ENCODE measurements at regions of chr2 and their contacts with region 1.

Region 1: GRCh38 chr2:68157402-68158133 is at the start of gene PNO1:
- DNase-seq: peak; percentile 98
- H3K4me3 Mint-ChIP-seq: peak within 1 kb of the TSS; percentile 91
- H3K27ac Mint-ChIP-seq: peak within 1 kb of the TSS; percentile 99
- H3K4me1 Mint-ChIP-seq: peaks cover 54% of the 10 kb centered on the region
- H3K27me3 Mint-ChIP-seq: no peaks in the 10 kb centered on the region
- total RNA-seq, gene PNO1: 14.5 to 14.6 TPM

Region 2: DNA sequence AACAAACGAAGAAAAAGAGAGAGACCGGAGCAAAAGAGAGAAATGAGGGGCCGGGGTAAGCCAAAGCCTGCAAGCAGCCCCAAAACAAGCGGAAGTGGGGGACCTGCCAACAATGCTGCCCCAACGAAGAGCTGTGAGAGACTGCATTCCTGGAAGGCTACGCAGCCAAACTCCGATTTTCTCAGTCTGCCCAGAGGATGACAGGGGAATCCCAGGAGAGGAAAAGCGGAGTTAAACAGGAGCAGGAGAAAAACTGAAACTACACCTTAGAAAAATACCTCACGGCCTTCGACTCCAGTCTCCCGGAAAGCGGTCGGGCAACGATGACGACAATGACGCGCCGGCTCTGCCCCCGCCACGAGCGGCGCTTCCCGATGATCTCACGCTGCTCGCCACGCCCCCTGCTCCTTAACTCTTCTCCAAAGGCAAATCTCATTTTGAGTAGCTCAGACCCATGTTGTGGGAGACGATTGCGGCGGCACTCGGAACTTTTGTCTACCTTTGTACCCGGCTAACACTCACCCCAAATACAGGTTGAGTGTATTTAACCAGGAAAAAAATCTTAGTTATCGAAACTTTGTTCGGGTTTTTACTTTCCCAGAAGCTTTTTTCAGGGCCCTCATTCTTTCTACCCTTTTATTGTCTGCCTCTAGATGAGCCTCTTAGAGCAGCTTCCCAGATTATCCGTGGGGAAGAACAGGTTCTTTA is 94.7 kb before region 1 on chr2 and contains the start of gene C1D:
- CTCF ChIA-PET with region 1: interaction called, 3 read pairs
- intact Hi-C with region 1: loop called (anchors 1 kb)
- DNase-seq: peak; percentile 96
- H3K4me3 Mint-ChIP-seq: peak within 1 kb of the TSS; percentile 89
- H3K27ac Mint-ChIP-seq: peak within 1 kb of the TSS; percentile 93
- H3K4me1 Mint-ChIP-seq: peaks cover 33% of the 10 kb centered on the region
- H3K27me3 Mint-ChIP-seq: no peaks in the 10 kb centered on the region
- total RNA-seq, gene C1D: 19.0 to 21.4 TPM

Region 3: GRCh38 chr2:68190991-68191731 is 33.6 kb after region 1 on chr2:
- CTCF ChIA-PET with region 1: no interaction called
- intact Hi-C with region 1: loop called (anchors 2 kb)
- DNase-seq: no peak
- H3K4me3 Mint-ChIP-seq: no peak overlapping the region
- H3K27ac Mint-ChIP-seq: peak overlapping the region; percentile 43
- H3K4me1 Mint-ChIP-seq: peaks cover 65% of the 10 kb centered on the region
- H3K27me3 Mint-ChIP-seq: no peaks in the 10 kb centered on the region

Region 4: GRCh38 chr2:68385220-68385906 is 227.8 kb after region 1 on chr2:
- CTCF ChIA-PET with region 1: no interaction called
- intact Hi-C with region 1: loop called (anchors 1 kb)
- DNase-seq: peak; percentile 72
- H3K4me3 Mint-ChIP-seq: no peak overlapping the region
- H3K27ac Mint-ChIP-seq: peak overlapping the region; percentile 9
- H3K4me1 Mint-ChIP-seq: peaks cover 40% of the 10 kb centered on the region
- H3K27me3 Mint-ChIP-seq: peaks cover 5% of the 10 kb centered on the region

Region 5: GRCh38 chr2:68742626-68743415 is 585.3 kb after region 1 on chr2:
- CTCF ChIA-PET with region 1: no interaction called
- intact Hi-C with region 1: loop called (anchors 5 kb)
- DNase-seq: peak; percentile 45
- H3K4me3 Mint-ChIP-seq: no peak overlapping the region
- H3K27ac Mint-ChIP-seq: peak overlapping the region; percentile 91
- H3K4me1 Mint-ChIP-seq: peaks cover 93% of the 10 kb centered on the region
- H3K27me3 Mint-ChIP-seq: no peaks in the 10 kb centered on the region

Measured in activated naive CD4-positive, alpha-beta T cell treated with anti-CD3 and anti-CD28 coated beads for 36 hours (primary cell).